Activated T-helper 2 cell treated with anti-CD3 and anti-CD28 coated beads, Interferon-gamma antibody, Interleukin-2, Interleukin-4, amounts not matched to agents 10 μg/mL and 5 μg/mL and 100 μg/mL, durations not matched to agents 14 hours and 24 hours and 36 hours (primary cell): ENCODE measurements at regions of chr10 and their contacts with region 1.

Region 1: DNA sequence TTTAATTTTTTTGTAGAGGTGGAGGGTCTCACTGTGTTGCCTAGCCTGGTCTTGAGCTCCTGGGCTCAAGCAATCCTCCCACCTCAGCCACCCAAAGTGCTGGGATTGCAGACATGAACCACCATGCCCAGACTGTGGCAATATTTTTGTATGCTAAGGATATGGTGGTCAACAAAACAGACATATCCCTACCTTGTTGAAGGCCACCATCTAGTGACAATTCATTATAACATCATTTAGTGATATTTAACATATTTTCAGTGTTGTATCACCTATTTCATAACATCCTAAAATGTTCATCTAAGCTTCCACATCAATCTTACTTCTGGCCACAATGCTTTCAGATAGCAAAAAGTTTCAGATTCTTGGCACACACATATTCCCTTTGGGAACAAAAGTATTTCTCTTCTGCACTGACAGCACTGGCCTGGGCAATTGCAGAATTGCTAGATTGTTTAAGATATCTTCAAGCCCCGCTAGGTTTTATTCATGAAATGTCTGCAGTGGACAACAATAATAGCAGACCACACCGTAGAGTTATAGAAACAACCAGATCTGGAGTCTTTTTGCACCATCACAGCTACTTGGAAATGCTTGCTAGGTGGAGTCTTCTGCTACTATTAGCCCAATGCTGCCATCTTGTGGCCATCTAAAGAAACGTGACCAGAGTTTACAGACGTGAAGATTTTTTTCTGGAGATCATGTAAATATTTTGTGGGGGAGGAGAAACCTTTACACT is 58.4 kb downstream of the DNAJC12 start:
- DNase-seq: peak; percentile 60
- H3K4me3 Mint-ChIP-seq: no peak overlapping the region
- H3K27ac Mint-ChIP-seq: no peak overlapping the region
- H3K4me1 Mint-ChIP-seq: peaks cover 45% of the 10 kb centered on the region
- H3K27me3 Mint-ChIP-seq: no peaks in the 10 kb centered on the region

Region 2: DNA sequence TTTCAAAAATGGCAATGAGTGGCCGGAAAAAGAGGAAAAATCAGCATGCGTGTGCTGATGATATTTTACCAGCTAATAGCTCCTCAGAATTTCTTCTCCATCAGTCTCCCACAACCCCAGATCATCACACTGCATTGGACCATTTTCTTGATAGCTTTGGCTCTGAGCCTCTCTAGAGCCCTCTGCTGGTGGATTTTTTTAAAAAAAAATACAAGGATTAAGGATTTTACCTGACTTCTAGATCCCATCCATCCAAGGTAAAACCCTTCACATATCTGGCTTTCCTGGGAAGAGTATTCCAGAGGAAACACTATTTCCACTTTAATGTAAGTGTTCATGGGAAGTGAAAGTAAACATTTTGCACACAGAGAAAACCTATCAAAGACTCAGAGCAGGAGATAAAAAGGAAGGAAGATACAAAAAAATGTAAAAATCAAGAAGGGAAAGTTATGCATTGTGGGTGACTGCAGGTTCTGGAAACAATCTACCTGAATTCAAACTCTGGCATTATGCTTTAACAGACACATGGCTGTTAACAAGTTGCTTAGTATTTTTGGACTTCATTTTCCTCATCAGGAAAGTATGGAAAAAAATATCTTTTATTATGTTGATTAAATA is 472.9 kb before region 1 on chr10:
- intact Hi-C with region 1: loop called (anchors 10 kb)
- DNase-seq: no peak
- H3K4me3 Mint-ChIP-seq: no peak overlapping the region
- H3K27ac Mint-ChIP-seq: no peak overlapping the region
- H3K4me1 Mint-ChIP-seq: peaks cover 2% of the 10 kb centered on the region
- H3K27me3 Mint-ChIP-seq: no peaks in the 10 kb centered on the region

Region 3: GRCh38 chr10:67539312-67539711 is 240.3 kb before region 1 on chr10:
- intact Hi-C with region 1: loop called (anchors 10 kb)
- DNase-seq: no peak
- H3K4me3 Mint-ChIP-seq: no peak overlapping the region
- H3K27ac Mint-ChIP-seq: no peak overlapping the region
- H3K4me1 Mint-ChIP-seq: no peaks in the 10 kb centered on the region
- H3K27me3 Mint-ChIP-seq: peaks cover 27% of the 10 kb centered on the region

Region 4: DNA sequence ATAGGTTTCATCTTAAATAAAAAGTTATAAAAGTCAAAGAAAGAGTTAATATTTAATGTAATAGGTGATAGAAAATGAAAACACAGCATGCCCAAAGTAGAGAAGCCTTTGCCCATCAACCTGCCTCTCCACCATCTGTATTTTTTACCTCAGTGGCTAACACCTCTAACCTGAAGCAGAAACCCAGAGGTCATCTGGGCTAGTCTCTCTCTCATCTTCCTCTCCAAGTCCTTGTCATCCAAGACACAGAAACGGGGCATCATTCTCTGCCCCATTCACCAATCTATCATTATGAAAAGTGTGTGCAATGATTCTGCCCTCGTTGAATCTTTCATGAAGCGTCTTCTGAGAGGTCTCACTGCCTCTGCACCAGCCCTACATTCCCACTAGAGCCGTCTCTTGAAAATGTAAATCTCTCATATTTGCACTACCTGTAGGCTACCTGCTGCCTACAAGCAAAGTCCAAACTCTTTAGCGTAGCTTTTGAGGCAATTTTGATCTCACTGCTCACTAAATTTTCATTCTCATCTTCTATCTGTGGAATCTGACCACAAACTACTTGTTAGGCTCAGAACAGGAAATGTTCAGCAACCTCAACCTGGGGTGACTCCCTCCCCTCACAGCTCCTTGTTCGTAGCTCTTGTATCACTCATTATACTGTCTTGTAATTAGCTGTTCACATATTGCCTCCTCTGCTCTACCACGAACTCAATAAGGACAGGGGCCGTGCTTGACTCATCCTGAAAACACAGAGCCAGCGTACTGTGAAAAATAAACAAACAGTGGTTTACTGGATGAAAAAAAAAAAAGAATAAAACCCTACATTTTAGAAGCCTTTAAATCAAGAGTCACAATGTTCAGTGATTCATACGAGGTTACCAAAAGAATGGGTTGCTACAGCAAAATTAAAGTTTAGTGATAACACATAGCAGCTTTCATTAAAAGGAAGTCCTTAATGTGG is 166.8 kb before region 1 on chr10:
- intact Hi-C with region 1: loop called (anchors 2 kb)
- DNase-seq: peak; percentile 77
- H3K4me3 Mint-ChIP-seq: peak overlapping the region; percentile 38
- H3K27ac Mint-ChIP-seq: peak overlapping the region; percentile 56
- H3K4me1 Mint-ChIP-seq: peaks cover 27% of the 10 kb centered on the region
- H3K27me3 Mint-ChIP-seq: peaks cover 40% of the 10 kb centered on the region

Region 5: DNA sequence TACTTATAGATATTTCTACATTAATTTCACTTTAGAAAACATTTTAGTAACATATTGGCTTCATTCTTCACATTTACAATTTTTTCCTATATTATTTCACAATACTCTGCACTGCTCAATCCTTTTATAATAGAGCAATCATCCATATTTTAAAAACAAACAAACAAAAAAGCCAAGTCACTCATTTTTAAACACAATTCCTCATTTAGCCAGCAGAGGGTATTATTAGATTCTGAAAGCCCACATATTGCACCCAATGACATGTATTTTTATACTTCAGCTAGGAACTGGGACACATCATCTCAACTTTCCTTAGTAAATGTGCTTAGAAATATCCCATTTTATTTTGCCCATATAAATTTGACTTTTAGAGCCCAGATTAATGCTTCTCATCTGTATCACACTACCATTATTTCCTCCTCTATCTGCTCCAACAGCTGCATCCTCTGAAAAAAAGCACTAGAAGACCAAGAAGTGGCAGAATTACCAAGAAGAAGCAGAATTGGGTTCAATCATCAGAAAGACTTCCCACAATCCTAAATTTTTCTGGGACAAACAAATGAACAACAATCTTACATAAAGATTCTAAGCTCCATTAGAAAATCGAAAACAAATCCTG is 113.1 kb before region 1 on chr10:
- intact Hi-C with region 1: loop called (anchors 1 kb)
- DNase-seq: no peak
- H3K4me3 Mint-ChIP-seq: no peak overlapping the region
- H3K27ac Mint-ChIP-seq: no peak overlapping the region
- H3K4me1 Mint-ChIP-seq: no peaks in the 10 kb centered on the region
- H3K27me3 Mint-ChIP-seq: peaks cover 7% of the 10 kb centered on the region

Region 6: DNA sequence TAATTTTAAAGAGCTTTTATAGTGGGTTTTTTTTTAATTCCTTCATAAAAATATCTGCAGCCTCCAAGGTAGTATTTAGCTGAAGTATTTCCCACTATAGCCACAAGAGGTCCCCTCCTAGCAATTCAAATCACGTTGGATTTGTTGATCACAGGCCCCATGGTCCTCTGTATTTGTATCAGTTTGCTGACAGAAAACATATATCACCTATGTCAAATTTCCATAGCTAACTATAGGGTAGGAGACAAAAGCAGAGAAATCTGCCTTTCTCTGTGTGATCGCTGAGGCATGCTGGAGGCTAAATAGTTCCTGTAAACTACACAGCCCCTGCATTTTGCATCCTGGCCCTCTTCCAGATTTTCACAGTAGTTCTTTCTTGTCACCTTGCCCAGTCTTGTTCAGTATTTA is 81.9 kb before region 1 on chr10:
- intact Hi-C with region 1: loop called (anchors 1 kb)
- DNase-seq: no peak
- H3K4me3 Mint-ChIP-seq: no peak overlapping the region
- H3K27ac Mint-ChIP-seq: no peak overlapping the region
- H3K4me1 Mint-ChIP-seq: peaks cover 8% of the 10 kb centered on the region
- H3K27me3 Mint-ChIP-seq: peaks cover 41% of the 10 kb centered on the region

Region 7: DNA sequence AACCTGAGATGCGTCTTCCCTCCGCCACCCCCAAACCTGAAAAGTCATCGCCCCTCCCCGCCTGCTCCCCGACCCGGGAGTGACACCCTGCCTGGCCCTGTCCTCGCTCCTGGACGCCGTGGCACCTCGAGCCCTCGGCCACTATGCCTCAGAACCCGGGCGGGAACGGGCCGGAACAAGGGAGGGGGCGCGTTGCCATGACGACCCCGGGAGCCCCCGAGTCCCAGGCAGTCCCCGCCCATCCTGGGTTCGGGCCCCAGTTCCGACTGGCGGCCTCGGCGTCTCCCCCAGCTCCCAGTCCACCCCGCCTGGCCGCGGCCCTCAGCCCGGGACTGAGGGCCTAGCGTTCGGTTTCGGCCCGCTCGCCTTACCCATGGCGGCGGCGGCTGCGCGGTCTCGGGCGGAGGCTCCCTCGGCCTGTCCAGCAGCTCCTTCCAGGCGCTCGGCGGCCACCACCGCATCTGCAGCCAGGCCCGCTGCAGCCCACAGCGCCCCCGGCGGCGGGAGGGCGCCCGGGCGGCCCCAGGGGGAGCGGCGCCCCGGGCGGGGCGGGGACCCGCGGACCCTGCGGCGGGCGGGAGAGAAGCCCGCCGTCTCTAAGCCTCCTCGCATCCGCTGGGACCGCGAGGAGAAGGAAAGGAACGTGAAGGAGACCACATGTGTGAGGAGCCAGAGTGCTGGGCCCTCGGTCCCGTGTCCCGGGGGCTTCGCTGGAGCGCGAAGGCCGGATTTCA is 627.3 kb after region 1 on chr10 and contains the start of gene RUFY2:
- intact Hi-C with region 1: no loop called
- DNase-seq: peak; percentile 75
- H3K4me3 Mint-ChIP-seq: peak within 1 kb of the TSS; percentile 87
- H3K27ac Mint-ChIP-seq: peak within 1 kb of the TSS; percentile 80
- H3K4me1 Mint-ChIP-seq: peaks cover 14% of the 10 kb centered on the region
- H3K27me3 Mint-ChIP-seq: no peaks in the 10 kb centered on the region
- total RNA-seq, gene RUFY2: 11.3 and 12.1 TPM in 2 replicates